ENCODE measurements at regions of chr14 and their contacts with region 1.

Region 1: GRCh38 chr14:55094321-55095157 is 34.5 kb upstream of the LGALS3 start:
- DNase-seq: no peak
- ATAC-seq: no peak

Region 2: DNA sequence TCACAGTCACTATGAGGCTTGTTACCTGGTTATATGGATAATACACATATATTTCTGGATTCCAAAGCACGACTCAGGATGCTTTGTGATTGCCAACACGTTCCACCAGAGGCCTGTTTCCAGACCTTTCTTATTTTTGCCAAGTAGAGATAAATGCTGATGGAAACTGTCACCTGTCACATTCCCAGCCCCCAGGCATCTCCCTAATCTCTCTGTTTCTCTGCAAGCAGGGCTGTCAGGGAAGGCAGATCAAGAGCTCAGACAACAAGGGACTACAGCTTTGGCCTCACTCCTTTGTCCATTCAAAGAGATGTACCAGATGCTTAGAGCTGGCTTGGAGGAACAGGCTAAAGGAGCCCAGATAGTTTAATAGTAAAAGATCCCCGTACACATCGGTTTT is 1919.6 kb before region 1 on chr14:
- intact Hi-C with region 1: loop called (anchors 5 kb)
- DNase-seq: no peak
- ATAC-seq: no peak

Region 3: DNA sequence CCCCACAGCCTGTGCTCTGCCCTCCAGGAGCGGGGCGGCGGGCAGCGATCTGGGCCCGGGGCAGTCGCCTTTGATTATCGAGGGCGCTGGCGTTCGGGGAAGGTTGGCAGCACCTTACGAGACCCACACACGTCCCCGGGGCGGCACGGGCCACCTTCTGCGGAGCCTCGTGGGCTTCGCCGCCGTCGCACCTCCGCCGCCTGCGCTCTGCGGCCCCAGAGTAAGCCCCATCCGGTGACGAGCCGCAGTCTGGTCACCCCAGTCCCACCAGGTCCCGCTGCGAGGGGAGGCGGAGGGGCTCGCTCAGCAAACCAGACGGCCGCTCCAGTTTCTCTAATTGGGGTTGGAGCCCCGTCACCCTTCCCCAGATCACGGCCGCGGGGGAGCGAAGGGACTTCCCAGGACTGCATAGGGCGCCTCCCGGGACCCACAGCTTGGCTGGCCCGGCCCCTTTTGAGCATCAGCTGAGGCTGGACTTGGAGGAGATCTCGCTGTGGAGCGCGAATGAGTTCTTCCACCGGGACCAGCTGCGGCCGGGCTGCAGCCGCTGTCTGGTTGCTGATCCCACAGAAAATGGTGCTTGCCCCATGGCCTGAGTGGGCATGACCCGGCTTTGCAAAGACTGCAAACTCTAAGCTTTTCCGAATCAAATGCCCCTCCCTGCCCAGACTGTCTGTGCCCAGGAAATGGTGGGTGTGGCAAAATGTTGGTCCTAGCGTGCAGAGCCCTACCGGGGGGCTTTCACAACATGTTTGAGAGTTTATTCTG is 35.1 kb after region 1 on chr14:
- intact Hi-C with region 1: loop called (anchors 5 kb)
- DNase-seq: peak; percentile 85
- ATAC-seq: peak; percentile 81

Measured in sciatic nerve (tissue), 2 donors.